HepG2 (cell line): ENCODE measurements at regions of chr17 and their contacts with region 1.

Region 1: GRCh38 chr17:45584092-45585036 is 93.8 kb upstream of the PLEKHM1 start:
- DNase-seq: peak; percentile 46
- ATAC-seq: peak; percentile 58
- H3K4me3 ChIP-seq: peak overlapping the region; percentile 69 to 82 (median 70)
- H3K27ac ChIP-seq: peak overlapping the region; percentile 80
- H3K4me1 ChIP-seq: peaks cover 39% of the 10 kb centered on the region
- H3K27me3 ChIP-seq: no peaks in the 10 kb centered on the region
- CTCF ChIP-seq: no peak
- EP300 ChIP-seq: no peak; a peak in 1 of 4 replicates
- POLR2A ChIP-seq: peak; percentile 42 to 47; a peak in 3 of 4 replicates
- RAD21 ChIP-seq: peak; percentile 29; the same call in 1 of the 2 replicates

Region 2: GRCh38 chr17:45666046-45666600 is 81.8 kb after region 1 on chr17:
- CTCF ChIA-PET with region 1: no interaction called
- POLR2A ChIA-PET with region 1: no interaction called
- in situ Hi-C with region 1: no loop called
- intact Hi-C with region 1: no loop called
- DNase-seq: no peak
- ATAC-seq: no peak
- H3K4me3 ChIP-seq: no peak overlapping the region
- H3K27ac ChIP-seq: no peak overlapping the region
- H3K4me1 ChIP-seq: no peaks in the 10 kb centered on the region
- H3K27me3 ChIP-seq: peaks cover 0 to 62% of the 10 kb centered on the region in 2 experiments; a peak in 4 of 5 replicates
- CTCF ChIP-seq: 0 out of 2 replicates have a peak, but pooled peaks have one; percentile 27
- EP300 ChIP-seq: no peak
- POLR2A ChIP-seq: no peak
- RAD21 ChIP-seq: no peak

Region 3: DNA sequence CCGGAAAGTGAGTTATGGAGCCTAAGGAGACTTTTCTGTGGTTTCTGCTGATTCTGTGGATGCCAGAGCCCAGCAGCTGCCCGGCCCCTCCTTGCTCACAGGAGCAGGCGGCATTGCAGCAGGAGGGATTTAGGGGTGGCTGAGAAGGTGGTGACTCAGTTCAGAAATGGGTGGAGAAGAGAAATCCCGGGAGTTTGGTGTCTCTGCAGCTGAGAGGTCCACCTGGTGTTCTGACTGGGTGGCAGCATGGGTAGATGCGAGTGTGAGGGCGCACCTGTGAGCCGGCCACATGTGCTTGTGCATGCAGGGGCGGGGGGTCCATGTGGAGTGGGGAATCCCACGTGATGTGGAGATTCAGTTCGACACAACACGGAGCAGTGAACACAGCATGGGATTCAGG is 244.3 kb after region 1 on chr17:
- CTCF ChIA-PET with region 1: no interaction called
- POLR2A ChIA-PET with region 1: no interaction called
- in situ Hi-C with region 1: no loop called
- intact Hi-C with region 1: no loop called
- DNase-seq: no peak
- ATAC-seq: no peak
- H3K4me3 ChIP-seq: no peak overlapping the region
- H3K27ac ChIP-seq: no peak overlapping the region
- H3K4me1 ChIP-seq: no peaks in the 10 kb centered on the region
- H3K27me3 ChIP-seq: peaks cover 30 to 86% of the 10 kb centered on the region in 2 experiments
- CTCF ChIP-seq: no peak
- EP300 ChIP-seq: no peak
- POLR2A ChIP-seq: no peak
- RAD21 ChIP-seq: no peak

Region 4: GRCh38 chr17:46266656-46267544 is 682.5 kb after region 1 on chr17:
- CTCF ChIA-PET with region 1: no interaction called
- POLR2A ChIA-PET with region 1: interaction called, 4 read pairs
- in situ Hi-C with region 1: loop called (anchors 25 kb)
- intact Hi-C with region 1: no loop called
- DNase-seq: peak; percentile 74
- ATAC-seq: peak; percentile 87
- H3K4me3 ChIP-seq: peak overlapping the region; percentile 77 to 96 (median 84)
- H3K27ac ChIP-seq: peak overlapping the region; percentile 81
- H3K4me1 ChIP-seq: peaks cover 65% of the 10 kb centered on the region
- H3K27me3 ChIP-seq: peaks cover 0 to 9% of the 10 kb centered on the region in 2 experiments; a peak in 1 of 5 replicates
- CTCF ChIP-seq: no peak; the same call in 1 of the 2 replicates
- EP300 ChIP-seq: no peak
- POLR2A ChIP-seq: peak; percentile 74 to 81
- RAD21 ChIP-seq: peak; percentile 27; the same call in 1 of the 2 replicates